ENCODE measurements at regions of chr11 and their contacts with region 1.

Region 1: GRCh38 chr11:44775366-44775984 is 48.7 kb downstream of the TSPAN18 start:
- DNase-seq: peak; percentile 57 to 65 (median 58)
- H3K4me3 ChIP-seq: no peak overlapping the region
- H3K4me3 Mint-ChIP-seq: peak overlapping the region in 1 of 8 donors; percentile 29
- H3K27ac ChIP-seq: no peak overlapping the region
- H3K27ac Mint-ChIP-seq: peak overlapping the region in 2 of 7 donors; percentile 74 to 86
- H3K4me1 ChIP-seq: no peaks in the 10 kb centered on the region
- H3K4me1 Mint-ChIP-seq: peaks cover 22 to 63% (median 32%) of the 10 kb centered on the region in 4 donors
- H3K27me3 ChIP-seq: no peaks in the 10 kb centered on the region
- H3K27me3 Mint-ChIP-seq: no peaks in the 10 kb centered on the region

Region 2: DNA sequence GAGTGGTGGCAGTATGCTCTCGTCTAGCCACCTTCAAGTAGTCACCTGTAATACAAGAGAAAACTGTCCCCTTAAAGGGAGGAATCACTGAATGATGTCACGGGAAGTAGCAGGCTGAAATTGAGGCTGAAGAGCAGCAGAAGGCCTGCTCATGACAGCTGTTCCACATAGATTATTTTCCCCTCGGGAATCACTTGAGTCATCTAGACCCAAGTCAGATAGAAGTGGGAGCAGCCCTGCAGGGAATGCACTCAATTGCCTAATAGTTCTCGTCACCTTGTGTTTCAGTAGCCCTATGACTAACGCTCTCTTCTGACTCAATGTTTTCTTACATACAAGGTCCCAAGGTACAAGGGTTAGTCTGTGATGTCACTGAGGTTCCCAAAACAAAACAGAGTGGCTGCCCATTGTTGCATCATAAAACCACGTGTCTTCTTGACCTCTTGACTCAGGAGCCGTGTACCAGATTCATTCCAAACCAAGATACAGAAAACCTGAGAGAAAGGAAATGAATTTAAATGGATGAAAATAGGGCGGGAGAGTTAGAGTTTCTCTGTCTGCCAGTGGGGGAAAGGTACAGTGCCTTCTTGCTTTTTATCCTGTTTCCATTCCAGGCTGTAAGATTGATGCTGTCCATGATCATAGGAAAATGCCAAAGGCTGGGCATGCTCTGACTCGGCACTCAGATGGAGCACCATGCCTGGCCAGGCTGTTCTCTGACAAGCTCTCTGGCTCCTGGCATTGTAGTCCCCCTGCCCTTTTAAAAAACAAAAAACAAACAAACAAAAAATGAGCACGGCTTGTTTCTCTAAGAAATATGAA is 854.7 kb before region 1 on chr11:
- CTCF ChIA-PET with region 1: no interaction called
- POLR2A ChIA-PET with region 1: no interaction called
- intact Hi-C with region 1: no loop called
- DNase-seq: no peak
- H3K4me3 ChIP-seq: no peak overlapping the region
- H3K4me3 Mint-ChIP-seq: peak overlapping the region in 1 of 8 donors; percentile 30
- H3K27ac ChIP-seq: no peak overlapping the region
- H3K27ac Mint-ChIP-seq: peak overlapping the region in 5 of 7 donors; percentile 23 to 70 (median 44)
- H3K4me1 ChIP-seq: no peaks in the 10 kb centered on the region
- H3K4me1 Mint-ChIP-seq: peaks cover 0 to 6% (median 1%) of the 10 kb centered on the region in 4 donors
- H3K27me3 ChIP-seq: no peaks in the 10 kb centered on the region
- H3K27me3 Mint-ChIP-seq: no peaks in the 10 kb centered on the region

Region 3: GRCh38 chr11:44286268-44286880 is 489.1 kb before region 1 on chr11:
- CTCF ChIA-PET with region 1: no interaction called
- POLR2A ChIA-PET with region 1: no interaction called
- intact Hi-C with region 1: no loop called
- DNase-seq: peak in 4 of 5 donors; percentile 41 to 49 (median 46)
- H3K4me3 ChIP-seq: no peak overlapping the region
- H3K4me3 Mint-ChIP-seq: no peak overlapping the region
- H3K27ac ChIP-seq: no peak overlapping the region
- H3K27ac Mint-ChIP-seq: peak overlapping the region in 1 of 7 donors; percentile 56
- H3K4me1 ChIP-seq: no peaks in the 10 kb centered on the region
- H3K4me1 Mint-ChIP-seq: peaks cover 0 to 2% (median 0%) of the 10 kb centered on the region in 4 donors
- H3K27me3 ChIP-seq: no peaks in the 10 kb centered on the region
- H3K27me3 Mint-ChIP-seq: peaks cover 6 to 7% of the 10 kb centered on the region in 2 donors

Region 4: DNA sequence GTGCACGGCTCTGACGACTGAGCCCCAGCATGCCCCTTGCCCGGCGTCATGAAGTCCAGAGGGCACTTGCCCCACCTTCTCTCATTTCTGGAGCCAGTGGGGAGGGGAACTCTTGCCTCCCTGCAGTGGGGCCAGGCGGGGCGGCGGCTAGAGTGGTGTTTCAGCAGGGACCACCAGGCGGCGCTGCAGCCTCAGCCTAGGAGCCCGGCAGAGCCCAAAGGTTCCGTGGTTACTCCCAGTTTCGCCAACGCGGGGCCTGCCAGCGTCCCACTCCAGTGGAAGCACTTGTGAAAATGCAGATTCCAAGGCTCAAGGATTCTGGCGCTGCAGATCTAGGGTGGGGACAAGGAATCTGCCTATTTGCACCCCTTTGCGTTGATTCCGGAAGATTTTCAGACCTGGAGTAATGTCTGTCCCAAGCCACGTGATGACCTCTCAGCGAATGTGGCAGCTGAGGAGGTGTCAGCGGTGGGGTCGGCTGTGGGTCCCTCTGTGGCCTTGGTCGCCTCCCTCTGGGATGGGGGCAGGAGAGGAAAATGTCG is 154.3 kb before region 1 on chr11:
- CTCF ChIA-PET with region 1: interaction called, 39 read pairs
- POLR2A ChIA-PET with region 1: no interaction called
- intact Hi-C with region 1: loop called (anchors 1 kb)
- DNase-seq: peak; percentile 55 to 64 (median 57)
- H3K4me3 ChIP-seq: no peak overlapping the region
- H3K4me3 Mint-ChIP-seq: peak overlapping the region in 1 of 8 donors; percentile 25
- H3K27ac ChIP-seq: no peak overlapping the region
- H3K27ac Mint-ChIP-seq: peak overlapping the region in 5 of 7 donors; percentile 25 to 52 (median 41)
- H3K4me1 ChIP-seq: peaks cover 28% of the 10 kb centered on the region
- H3K4me1 Mint-ChIP-seq: peaks cover 18 to 62% (median 42%) of the 10 kb centered on the region in 4 donors
- H3K27me3 ChIP-seq: no peaks in the 10 kb centered on the region
- H3K27me3 Mint-ChIP-seq: no peaks in the 10 kb centered on the region

Region 5: GRCh38 chr11:44658506-44658850 is 117.0 kb before region 1 on chr11:
- CTCF ChIA-PET with region 1: interaction called, 69 read pairs
- POLR2A ChIA-PET with region 1: no interaction called
- intact Hi-C with region 1: loop called (anchors 1 kb)
- DNase-seq: peak in 4 of 5 donors; percentile 30 to 44 (median 32)
- H3K4me3 ChIP-seq: no peak overlapping the region
- H3K4me3 Mint-ChIP-seq: peak overlapping the region in 2 of 8 donors; percentile 27 to 66
- H3K27ac ChIP-seq: no peak overlapping the region
- H3K27ac Mint-ChIP-seq: peak overlapping the region in 2 of 7 donors; percentile 11 to 81
- H3K4me1 ChIP-seq: peaks cover 18% of the 10 kb centered on the region
- H3K4me1 Mint-ChIP-seq: peaks cover 19 to 38% (median 25%) of the 10 kb centered on the region in 4 donors
- H3K27me3 ChIP-seq: no peaks in the 10 kb centered on the region
- H3K27me3 Mint-ChIP-seq: no peaks in the 10 kb centered on the region

Region 6: GRCh38 chr11:44737245-44738085 is 38.0 kb before region 1 on chr11:
- CTCF ChIA-PET with region 1: interaction called, 14 read pairs
- POLR2A ChIA-PET with region 1: no interaction called
- intact Hi-C with region 1: no loop called
- DNase-seq: no peak
- H3K4me3 ChIP-seq: no peak overlapping the region
- H3K4me3 Mint-ChIP-seq: peak overlapping the region in 1 of 8 donors; percentile 6
- H3K27ac ChIP-seq: no peak overlapping the region
- H3K27ac Mint-ChIP-seq: peak overlapping the region in 6 of 7 donors; percentile 5 to 82 (median 68)
- H3K4me1 ChIP-seq: peaks cover 20% of the 10 kb centered on the region
- H3K4me1 Mint-ChIP-seq: peaks cover 31 to 87% (median 49%) of the 10 kb centered on the region in 4 donors
- H3K27me3 ChIP-seq: no peaks in the 10 kb centered on the region
- H3K27me3 Mint-ChIP-seq: no peaks in the 10 kb centered on the region

Region 7: GRCh38 chr11:44760917-44761550 is 14.4 kb before region 1 on chr11:
- CTCF ChIA-PET with region 1: interaction called, 32 read pairs
- POLR2A ChIA-PET with region 1: no interaction called
- intact Hi-C with region 1: no loop called
- DNase-seq: no peak
- H3K4me3 ChIP-seq: no peak overlapping the region
- H3K4me3 Mint-ChIP-seq: no peak overlapping the region
- H3K27ac ChIP-seq: no peak overlapping the region
- H3K27ac Mint-ChIP-seq: peak overlapping the region in 2 of 7 donors; percentile 39 to 65
- H3K4me1 ChIP-seq: no peaks in the 10 kb centered on the region
- H3K4me1 Mint-ChIP-seq: peaks cover 17 to 50% (median 30%) of the 10 kb centered on the region in 4 donors
- H3K27me3 ChIP-seq: no peaks in the 10 kb centered on the region
- H3K27me3 Mint-ChIP-seq: no peaks in the 10 kb centered on the region

Region 8: GRCh38 chr11:44877571-44878497 is 102.4 kb after region 1 on chr11:
- CTCF ChIA-PET with region 1: interaction called, 3 read pairs
- POLR2A ChIA-PET with region 1: no interaction called
- intact Hi-C with region 1: loop called (anchors 5 kb)
- DNase-seq: no peak
- H3K4me3 ChIP-seq: no peak overlapping the region
- H3K4me3 Mint-ChIP-seq: no peak overlapping the region
- H3K27ac ChIP-seq: no peak overlapping the region
- H3K27ac Mint-ChIP-seq: no peak overlapping the region
- H3K4me1 ChIP-seq: no peaks in the 10 kb centered on the region
- H3K4me1 Mint-ChIP-seq: peaks cover under 1 to 15% (median 2%) of the 10 kb centered on the region in 4 donors
- H3K27me3 ChIP-seq: no peaks in the 10 kb centered on the region
- H3K27me3 Mint-ChIP-seq: no peaks in the 10 kb centered on the region

Measured in CD4-positive, alpha-beta memory T cell (primary cell).